ENCODE measurements at regions of chr17 and their contacts with region 1.

Region 1: DNA sequence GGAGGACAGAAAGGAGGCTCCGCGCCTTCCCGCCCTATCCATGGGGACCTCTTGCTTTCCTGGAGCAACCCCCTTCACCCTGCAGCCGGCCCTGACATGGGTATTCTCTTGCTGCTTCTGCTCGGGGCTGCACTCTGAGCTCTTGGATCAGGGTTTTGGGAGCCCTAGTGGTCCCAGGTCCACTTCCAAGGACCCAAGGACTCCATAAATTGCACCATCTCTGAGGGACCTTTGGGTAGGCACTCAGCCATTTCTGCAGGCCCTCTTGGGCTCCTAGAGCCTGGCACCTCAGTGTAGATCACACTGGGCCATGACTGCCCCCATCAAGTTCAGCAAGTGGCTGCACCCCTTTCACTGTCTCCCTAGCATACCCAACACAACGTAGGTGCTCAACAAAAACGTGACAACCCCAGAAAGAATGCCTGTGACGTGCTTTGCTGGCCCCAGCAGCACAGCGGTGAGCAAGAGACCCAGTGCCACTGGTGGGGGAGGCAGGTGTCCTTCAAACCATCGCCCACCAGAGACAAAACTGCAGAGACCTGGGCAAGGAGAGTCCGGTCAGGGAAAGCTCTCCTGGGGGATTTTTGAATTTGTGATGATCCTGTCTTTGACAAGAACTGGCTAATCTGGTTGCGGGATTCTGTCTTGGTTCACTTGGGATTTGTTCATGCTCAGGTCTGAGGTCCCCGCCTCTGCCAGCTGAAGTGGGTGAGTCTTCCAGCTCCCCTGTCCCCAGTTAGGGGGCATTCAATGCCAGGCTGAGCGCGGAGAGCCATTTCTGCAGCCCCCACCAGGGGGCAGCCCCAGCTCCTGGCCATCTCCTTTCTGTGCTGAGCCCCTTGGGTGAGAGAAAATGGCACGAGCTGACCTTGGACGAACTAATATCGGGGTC is 2.5 kb upstream of the RAB11FIP4 start:
- DNase-seq: peak; percentile 32
- H3K4me3 ChIP-seq: no peak overlapping the region
- H3K27ac ChIP-seq: no peak overlapping the region
- H3K4me1 ChIP-seq: no peaks in the 10 kb centered on the region
- H3K27me3 ChIP-seq: peaks cover 13 to 17% of the 10 kb centered on the region in 2 experiments
- CTCF ChIP-seq: peak; percentile 78 to 90
- POLR2A ChIP-seq: no peak

Region 2: DNA sequence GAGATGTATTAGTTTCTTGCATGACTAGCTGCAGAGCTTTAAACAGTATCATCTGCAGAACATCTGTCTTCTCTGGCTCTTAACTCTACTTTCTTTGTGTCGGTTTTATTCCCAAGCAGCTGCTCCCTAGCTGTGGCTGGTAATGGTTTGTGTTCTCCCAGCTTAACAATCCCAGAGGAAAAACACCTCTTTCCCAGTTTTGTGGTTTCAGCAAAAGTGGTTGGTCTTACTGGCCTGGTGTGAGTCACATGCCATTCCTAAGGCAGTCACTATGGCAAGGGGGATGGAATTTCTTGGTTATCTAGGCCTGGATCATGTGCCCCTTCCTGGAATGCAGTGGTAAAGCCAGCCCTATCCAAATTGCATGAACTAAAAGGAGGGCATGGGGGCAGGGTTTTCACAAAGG is 119.4 kb before region 1 on chr17:
- CTCF ChIA-PET with region 1: no interaction called
- POLR2A ChIA-PET with region 1: no interaction called
- dilution Hi-C with region 1: no loop called
- intact Hi-C with region 1: no loop called
- DNase-seq: peak; percentile 88
- H3K4me3 ChIP-seq: no peak overlapping the region
- H3K27ac ChIP-seq: peak overlapping the region; percentile 61
- H3K4me1 ChIP-seq: peaks cover 21% of the 10 kb centered on the region
- H3K27me3 ChIP-seq: no peaks in the 10 kb centered on the region
- CTCF ChIP-seq: no peak
- POLR2A ChIP-seq: no peak

Region 3: DNA sequence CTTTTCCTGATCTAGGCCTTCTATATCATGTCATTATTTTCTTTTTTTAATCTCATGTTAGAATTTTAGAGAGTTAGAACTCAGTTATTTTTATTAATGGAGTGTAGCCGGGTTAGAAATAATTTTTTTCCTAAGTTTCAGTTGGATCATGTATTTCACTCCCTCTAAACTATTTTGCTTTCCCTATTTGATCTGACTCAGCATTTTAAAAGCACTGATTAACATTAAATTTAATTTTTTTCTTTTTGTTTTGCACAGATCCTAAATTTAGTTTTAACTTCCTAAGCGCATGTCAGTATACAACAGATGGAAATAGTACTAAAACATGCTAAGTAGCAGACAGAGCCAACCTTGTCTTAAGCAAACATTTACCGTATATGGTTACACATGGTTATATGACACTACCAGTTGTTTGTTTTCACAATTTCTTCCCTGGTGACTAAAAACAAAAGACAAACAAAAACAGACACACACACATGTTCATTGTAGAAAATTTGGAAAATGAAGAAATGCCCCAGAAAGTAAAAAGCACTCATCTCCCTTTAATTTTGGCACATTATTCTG is 31.1 kb before region 1 on chr17:
- CTCF ChIA-PET with region 1: no interaction called
- POLR2A ChIA-PET with region 1: no interaction called
- dilution Hi-C with region 1: no loop called
- intact Hi-C with region 1: no loop called
- DNase-seq: no peak
- H3K4me3 ChIP-seq: no peak overlapping the region
- H3K27ac ChIP-seq: no peak overlapping the region
- H3K4me1 ChIP-seq: no peaks in the 10 kb centered on the region
- H3K27me3 ChIP-seq: no peaks in the 10 kb centered on the region
- CTCF ChIP-seq: no peak
- POLR2A ChIP-seq: no peak

Region 4: GRCh38 chr17:31401456-31402254 is 12.6 kb after region 1 on chr17:
- CTCF ChIA-PET with region 1: interaction called, 14 read pairs
- POLR2A ChIA-PET with region 1: no interaction called
- dilution Hi-C with region 1: no loop called
- intact Hi-C with region 1: no loop called
- DNase-seq: no peak
- H3K4me3 ChIP-seq: no peak overlapping the region
- H3K27ac ChIP-seq: no peak overlapping the region
- H3K4me1 ChIP-seq: no peaks in the 10 kb centered on the region
- H3K27me3 ChIP-seq: peaks cover 0 to 3% of the 10 kb centered on the region in 2 experiments
- CTCF ChIP-seq: no peak
- POLR2A ChIP-seq: no peak

Region 5: DNA sequence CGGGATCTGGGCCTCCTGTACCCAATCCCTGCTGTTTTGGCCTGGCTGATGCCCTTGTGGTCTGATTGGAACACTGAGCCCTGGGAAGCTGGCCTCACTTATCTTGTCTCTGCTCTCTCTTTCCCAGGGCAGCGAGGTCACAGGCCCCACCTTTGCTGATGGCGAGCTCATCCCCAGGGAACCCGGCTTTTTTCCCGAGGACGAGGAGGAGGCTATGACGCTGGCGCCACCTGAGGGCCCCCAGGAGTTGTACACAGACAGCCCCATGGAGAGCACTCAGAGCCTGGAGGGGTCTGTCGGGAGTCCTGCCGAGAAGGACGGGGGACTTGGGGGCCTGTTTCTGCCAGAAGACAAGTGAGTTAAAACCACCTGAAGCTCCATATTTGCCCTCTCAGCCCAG is 128.5 kb after region 1 on chr17:
- CTCF ChIA-PET with region 1: interaction called, 92 read pairs
- POLR2A ChIA-PET with region 1: no interaction called
- dilution Hi-C with region 1: no loop called
- intact Hi-C with region 1: no loop called
- DNase-seq: no peak
- H3K4me3 ChIP-seq: no peak overlapping the region
- H3K27ac ChIP-seq: no peak overlapping the region
- H3K4me1 ChIP-seq: no peaks in the 10 kb centered on the region
- H3K27me3 ChIP-seq: no peaks in the 10 kb centered on the region
- CTCF ChIP-seq: peak in 1 of 2 donors; percentile 33
- POLR2A ChIP-seq: no peak

Measured in endothelial cell of umbilical vein (primary cell).